Activated CD4-positive, alpha-beta memory T cell treated with anti-CD3 and anti-CD28 coated beads for 36 hours (primary cell): ENCODE measurements at regions of chr12 and their contacts with region 1.

Region 1: DNA sequence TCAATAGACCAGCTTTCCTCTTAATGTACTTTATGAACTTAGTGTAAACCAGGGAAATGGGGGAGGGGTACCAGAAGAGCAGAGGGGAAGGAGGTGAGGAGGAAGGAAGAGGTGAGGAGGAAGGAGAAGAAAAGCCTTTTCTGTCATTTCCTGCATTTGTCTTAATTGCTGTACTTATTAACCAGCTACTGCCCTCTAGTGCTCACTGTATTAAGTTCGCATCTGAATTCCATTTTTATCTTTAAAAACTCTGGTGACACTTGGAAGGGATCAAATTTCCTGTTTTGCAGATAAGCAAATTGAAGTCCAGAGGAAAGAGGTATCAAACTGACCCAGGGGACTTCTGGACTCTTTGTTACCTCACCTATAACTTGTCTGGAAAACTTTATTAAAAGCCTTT is 22.2 kb downstream of the MANSC1 start:
- DNase-seq: no peak
- H3K4me3 Mint-ChIP-seq: no peak overlapping the region
- H3K27ac Mint-ChIP-seq: no peak overlapping the region
- H3K4me1 Mint-ChIP-seq: peaks cover 15% of the 10 kb centered on the region
- H3K27me3 Mint-ChIP-seq: no peaks in the 10 kb centered on the region

Region 2: GRCh38 chr12:11581179-11581755 is 746.5 kb before region 1 on chr12:
- CTCF ChIA-PET with region 1: interaction called, 18 read pairs
- POLR2A ChIA-PET with region 1: no interaction called
- intact Hi-C with region 1: loop called (anchors 2 kb)
- DNase-seq: peak; percentile 63
- H3K4me3 Mint-ChIP-seq: no peak overlapping the region
- H3K27ac Mint-ChIP-seq: no peak overlapping the region
- H3K4me1 Mint-ChIP-seq: peaks cover 23% of the 10 kb centered on the region
- H3K27me3 Mint-ChIP-seq: peaks cover 2% of the 10 kb centered on the region

Region 3: GRCh38 chr12:12081836-12082497 is 245.8 kb before region 1 on chr12:
- CTCF ChIA-PET with region 1: interaction called, 13 read pairs
- POLR2A ChIA-PET with region 1: no interaction called
- intact Hi-C with region 1: no loop called
- DNase-seq: no peak
- H3K4me3 Mint-ChIP-seq: no peak overlapping the region
- H3K27ac Mint-ChIP-seq: no peak overlapping the region
- H3K4me1 Mint-ChIP-seq: no peaks in the 10 kb centered on the region
- H3K27me3 Mint-ChIP-seq: no peaks in the 10 kb centered on the region

Region 4: DNA sequence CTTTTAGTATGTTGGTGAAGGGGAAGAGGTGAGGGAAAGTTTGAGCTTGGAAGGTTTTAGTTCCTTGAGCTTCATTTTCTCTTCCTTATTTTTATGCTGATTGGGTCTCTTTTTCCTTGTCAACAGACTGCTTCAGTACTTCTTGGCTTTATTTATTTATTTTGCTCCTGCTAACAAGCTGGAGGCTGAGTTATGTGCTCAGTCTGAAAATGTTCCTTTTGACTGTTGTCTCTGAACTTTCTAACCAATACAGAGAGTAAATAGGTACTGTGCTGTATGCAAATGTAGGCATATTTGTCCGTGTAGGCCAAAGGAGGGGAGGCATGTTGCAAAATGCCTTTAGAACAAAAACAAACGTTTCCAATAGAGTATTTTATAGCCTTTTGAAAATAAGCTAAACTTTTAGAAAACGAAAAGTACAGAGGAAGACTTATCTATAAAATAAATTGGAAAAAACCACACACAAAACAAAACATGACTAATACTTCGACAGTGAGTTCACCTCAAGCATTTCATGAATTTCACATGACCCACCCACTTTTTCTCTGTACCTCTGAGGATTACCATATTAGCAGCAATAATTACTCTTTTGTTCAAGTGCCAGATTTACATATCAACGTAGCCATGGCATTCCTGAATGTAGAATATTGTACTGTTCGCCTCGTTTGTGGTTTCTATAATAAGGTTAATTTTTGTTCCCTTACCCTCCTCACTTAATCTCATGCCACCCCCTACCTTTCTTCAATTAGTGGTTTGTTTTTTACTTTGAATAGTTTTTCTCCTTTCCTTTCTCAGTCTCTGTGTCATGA is 279.2 kb after region 1 on chr12:
- CTCF ChIA-PET with region 1: no interaction called
- POLR2A ChIA-PET with region 1: no interaction called
- intact Hi-C with region 1: no loop called
- DNase-seq: no peak
- H3K4me3 Mint-ChIP-seq: peak overlapping the region; percentile 48
- H3K27ac Mint-ChIP-seq: peak overlapping the region; percentile 87
- H3K4me1 Mint-ChIP-seq: peaks cover 35% of the 10 kb centered on the region
- H3K27me3 Mint-ChIP-seq: no peaks in the 10 kb centered on the region